ENCODE measurements at regions of chr10 and their contacts with region 1.

Region 1: DNA sequence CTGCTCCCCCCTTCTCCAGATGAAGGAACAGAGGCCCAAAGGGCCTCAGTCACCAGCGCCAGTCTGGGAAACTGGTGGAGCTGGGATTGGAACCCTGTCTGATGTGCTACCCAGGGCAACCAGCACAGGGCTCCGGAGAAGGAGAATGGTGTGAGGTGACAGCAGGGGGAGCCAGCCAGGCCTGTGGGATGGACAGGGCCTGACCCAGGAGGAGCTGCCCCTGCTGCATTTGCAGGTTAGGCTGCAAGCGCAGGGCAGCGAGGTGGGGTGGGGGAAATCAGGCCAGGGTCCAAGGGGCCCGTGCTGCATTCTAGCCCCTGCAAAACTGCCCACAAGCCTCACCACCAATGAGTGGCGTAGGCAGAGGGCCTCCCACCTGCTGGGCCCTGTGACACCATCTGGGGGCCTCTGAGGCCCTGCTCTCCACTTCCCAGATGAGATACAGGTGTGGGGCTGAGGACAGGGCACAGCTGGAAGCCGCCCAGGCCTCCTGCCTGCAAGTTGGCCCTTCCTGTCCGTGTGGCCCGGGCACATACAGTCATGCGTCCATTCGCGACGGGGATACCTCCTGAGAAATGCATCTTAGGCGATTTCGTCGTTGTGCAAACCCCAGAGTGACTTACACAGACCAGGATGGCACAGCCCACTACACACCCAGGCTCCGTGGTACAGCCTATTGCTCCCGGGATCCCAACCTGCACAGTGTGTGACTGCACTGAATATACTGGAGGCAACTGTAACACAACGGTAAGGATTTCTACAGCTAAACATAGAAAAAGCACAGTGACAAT is 45.3 kb downstream of the RASGEF1A start:
- DNase-seq: no peak
- H3K4me3 ChIP-seq: no peak overlapping the region
- H3K4me3 Mint-ChIP-seq: no peak overlapping the region
- H3K27ac ChIP-seq: no peak overlapping the region
- H3K27ac Mint-ChIP-seq: no peak overlapping the region
- H3K4me1 ChIP-seq: peaks cover 13% of the 10 kb centered on the region
- H3K4me1 Mint-ChIP-seq: peaks cover 7 to 18% (median 12%) of the 10 kb centered on the region in 4 donors
- H3K27me3 ChIP-seq: no peaks in the 10 kb centered on the region
- H3K27me3 Mint-ChIP-seq: peaks cover under 1 to 1% of the 10 kb centered on the region in 2 donors

Region 2: GRCh38 chr10:43255634-43256431 is 34.2 kb after region 1 on chr10:
- CTCF ChIA-PET with region 1: no interaction called
- POLR2A ChIA-PET with region 1: no interaction called
- intact Hi-C with region 1: loop called (anchors 5 kb)
- DNase-seq: peak; percentile 26 to 44 (median 34)
- H3K4me3 ChIP-seq: no peak overlapping the region
- H3K4me3 Mint-ChIP-seq: no peak overlapping the region
- H3K27ac ChIP-seq: no peak overlapping the region
- H3K27ac Mint-ChIP-seq: peak overlapping the region in 4 of 7 donors; percentile 33 to 75 (median 47)
- H3K4me1 ChIP-seq: peaks cover 12% of the 10 kb centered on the region
- H3K4me1 Mint-ChIP-seq: peaks cover 6 to 36% (median 15%) of the 10 kb centered on the region in 4 donors
- H3K27me3 ChIP-seq: no peaks in the 10 kb centered on the region
- H3K27me3 Mint-ChIP-seq: no peaks in the 10 kb centered on the region